Naive thymus-derived CD4-positive, alpha-beta T cell (primary cell): ENCODE measurements at regions of chr15 and their contacts with region 1.

Region 1: DNA sequence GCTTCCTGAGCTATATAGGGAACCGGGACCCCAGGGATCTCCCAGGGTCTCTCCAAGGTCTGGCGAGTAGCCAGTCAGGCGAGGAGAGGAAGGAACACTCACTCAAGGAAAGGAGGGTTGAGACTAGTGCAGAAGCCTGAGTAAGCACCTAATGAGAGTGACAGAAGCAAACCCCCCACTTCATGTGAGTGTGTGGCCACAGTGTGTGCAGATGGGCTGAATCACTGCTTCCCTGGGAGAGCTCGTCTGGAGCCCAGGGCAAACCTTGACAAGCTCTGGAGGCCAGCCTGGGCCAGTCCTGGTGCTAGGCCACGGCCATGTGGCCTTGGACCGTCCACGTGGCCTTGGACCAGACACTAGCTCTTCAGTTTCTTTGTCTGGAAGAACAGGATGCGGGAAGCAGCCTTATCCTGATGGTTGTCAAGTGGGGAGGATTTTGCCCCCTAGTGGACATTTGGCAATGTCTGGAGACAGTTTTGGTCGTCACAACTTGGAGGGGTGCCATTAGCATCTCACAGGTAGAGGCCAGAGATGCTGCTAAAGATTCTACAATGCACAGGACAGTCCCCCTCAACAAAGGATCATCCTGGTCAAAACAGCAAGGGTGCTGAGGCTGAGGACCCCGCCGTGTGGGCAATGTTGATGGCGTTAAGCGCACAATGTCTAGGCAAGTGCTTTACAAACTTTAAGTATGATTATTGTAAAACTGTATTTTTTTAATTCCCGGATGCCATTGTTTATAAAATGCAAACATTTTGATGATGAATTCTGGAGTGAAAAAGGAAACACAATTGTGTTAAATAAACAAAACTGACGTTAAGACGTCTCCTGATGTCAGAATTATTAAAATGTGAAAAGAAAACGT is 34.8 kb upstream of the CTSH start:
- DNase-seq: peak in 6 of 9 donors; percentile 1 to 21 (median 10)
- ATAC-seq: peak; percentile 27
- H3K4me3 ChIP-seq: no peak overlapping the region
- H3K4me3 Mint-ChIP-seq: no peak overlapping the region
- H3K27ac ChIP-seq: no peak overlapping the region
- H3K27ac Mint-ChIP-seq: peak overlapping the region in 1 of 9 donors; percentile 62
- H3K4me1 ChIP-seq: no peaks in the 10 kb centered on the region
- H3K4me1 Mint-ChIP-seq: peaks cover 0 to 12% (median 0%) of the 10 kb centered on the region in 7 donors
- H3K27me3 ChIP-seq: no peaks in the 10 kb centered on the region
- H3K27me3 Mint-ChIP-seq: peaks cover 0 to 18% (median 6%) of the 10 kb centered on the region in 5 donors

Region 2: GRCh38 chr15:78859971-78860732 is 119.5 kb before region 1 on chr15:
- CTCF ChIA-PET with region 1: no interaction called
- POLR2A ChIA-PET with region 1: no interaction called
- intact Hi-C with region 1: loop called in 1 of 2 experiments (anchors 1 kb)
- DNase-seq: peak; percentile 41 to 80 (median 61)
- ATAC-seq: peak; percentile 84
- H3K4me3 ChIP-seq: peak overlapping the region; percentile 46
- H3K4me3 Mint-ChIP-seq: peak overlapping the region; percentile 69 to 90 (median 84)
- H3K27ac ChIP-seq: peak overlapping the region; percentile 36
- H3K27ac Mint-ChIP-seq: peak overlapping the region; percentile 13 to 95 (median 83)
- H3K4me1 ChIP-seq: no peaks in the 10 kb centered on the region
- H3K4me1 Mint-ChIP-seq: peaks cover 0 to 10% (median 6%) of the 10 kb centered on the region in 7 donors
- H3K27me3 ChIP-seq: no peaks in the 10 kb centered on the region
- H3K27me3 Mint-ChIP-seq: peaks cover 0 to 15% (median 0%) of the 10 kb centered on the region in 5 donors

Region 3: DNA sequence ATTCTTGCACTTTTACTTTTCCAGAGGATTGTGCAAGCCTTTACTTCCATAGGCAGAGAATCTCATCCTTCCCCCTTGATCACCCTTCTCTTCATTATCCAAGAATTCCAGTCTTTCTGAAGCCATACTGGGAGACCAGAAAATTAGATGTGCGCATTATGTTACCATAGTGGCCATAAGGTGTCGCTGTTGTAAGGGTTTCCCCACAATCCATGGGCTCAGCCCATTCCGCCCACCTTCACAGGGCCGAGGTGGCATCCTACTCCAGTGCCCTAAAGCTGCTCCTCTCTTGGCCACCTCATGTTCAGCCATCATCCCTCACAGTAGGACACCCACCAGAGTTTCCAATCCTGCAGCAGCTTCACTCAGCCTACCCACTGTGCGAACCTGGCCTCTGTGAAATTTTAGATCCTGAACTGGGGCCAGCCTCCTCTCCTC is 69.9 kb before region 1 on chr15:
- CTCF ChIA-PET with region 1: no interaction called
- POLR2A ChIA-PET with region 1: no interaction called
- intact Hi-C with region 1: loop called (anchors 1 kb)
- DNase-seq: peak in 2 of 9 donors; percentile 19 to 23
- ATAC-seq: peak; percentile 65
- H3K4me3 ChIP-seq: no peak overlapping the region
- H3K4me3 Mint-ChIP-seq: no peak overlapping the region
- H3K27ac ChIP-seq: no peak overlapping the region
- H3K27ac Mint-ChIP-seq: peak overlapping the region in 6 of 9 donors; percentile 1 to 68 (median 39)
- H3K4me1 ChIP-seq: no peaks in the 10 kb centered on the region
- H3K4me1 Mint-ChIP-seq: peaks cover 5 to 41% (median 26%) of the 10 kb centered on the region in 7 donors
- H3K27me3 ChIP-seq: no peaks in the 10 kb centered on the region
- H3K27me3 Mint-ChIP-seq: no peaks in the 10 kb centered on the region

Region 4: GRCh38 chr15:78944669-78945407 is 34.9 kb before region 1 on chr15 and contains the start of gene CTSH:
- CTCF ChIA-PET with region 1: no interaction called
- POLR2A ChIA-PET with region 1: no interaction called
- intact Hi-C with region 1: loop called in 1 of 2 experiments (anchors 5 kb)
- DNase-seq: peak; percentile 30 to 80 (median 60)
- ATAC-seq: peak; percentile 93
- H3K4me3 ChIP-seq: peak within 1 kb of the TSS; percentile 60
- H3K4me3 Mint-ChIP-seq: peak within 1 kb of the TSS; percentile 59 to 89 (median 74)
- H3K27ac ChIP-seq: no peak within 1 kb of the TSS
- H3K27ac Mint-ChIP-seq: peak within 1 kb of the TSS in 1 of 9 donors; percentile 52
- H3K4me1 ChIP-seq: peaks cover 0 to 6% of the 10 kb centered on the region in 2 donors
- H3K4me1 Mint-ChIP-seq: peaks cover 0 to 9% (median 7%) of the 10 kb centered on the region in 7 donors
- H3K27me3 ChIP-seq: no peaks in the 10 kb centered on the region
- H3K27me3 Mint-ChIP-seq: peaks cover 0 to 37% (median 5%) of the 10 kb centered on the region in 5 donors
- total RNA-seq, gene CTSH: 8.4 to 98.4 (median 10.4) TPM

Region 5: DNA sequence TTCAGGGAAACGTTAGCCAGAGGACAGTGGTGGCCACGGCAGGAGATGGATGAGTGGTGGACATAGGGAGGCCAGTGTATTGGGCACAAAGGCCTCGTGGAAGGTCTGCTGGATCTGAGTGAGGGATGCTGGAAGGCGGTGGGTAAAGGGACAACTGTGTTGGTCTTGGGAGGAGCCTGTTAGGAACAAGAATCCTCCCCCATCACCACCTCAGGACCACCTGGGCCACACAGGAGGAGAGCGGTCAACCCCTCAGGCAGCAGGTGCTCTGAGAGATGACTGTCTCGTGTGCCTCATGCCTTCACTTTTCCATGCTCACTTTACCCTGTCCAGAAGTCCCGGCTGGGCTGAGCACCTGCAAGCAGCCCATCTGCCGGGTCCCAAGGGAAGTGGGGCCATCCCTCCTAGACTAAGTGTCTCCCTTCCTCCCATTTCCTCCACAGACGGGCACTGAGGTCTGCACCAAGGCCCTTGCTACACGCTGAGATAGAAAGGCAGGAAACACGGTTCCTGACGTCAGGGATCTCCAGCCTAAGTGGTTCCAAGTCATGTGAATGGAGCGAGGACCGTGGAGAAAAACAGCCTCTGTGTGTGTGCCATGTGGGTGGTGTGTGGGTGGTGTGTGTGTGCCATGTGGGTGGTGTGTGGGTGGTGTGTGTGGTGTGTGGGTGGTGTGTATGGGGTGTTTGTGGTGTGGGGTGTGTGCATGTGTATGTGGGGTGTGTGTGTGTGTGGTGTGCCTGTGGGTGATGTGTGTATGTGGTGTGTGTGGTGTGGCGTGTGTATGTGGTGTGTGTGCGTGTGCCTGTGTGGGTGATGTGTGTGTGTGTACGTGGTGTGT is 12.9 kb after region 1 on chr15:
- CTCF ChIA-PET with region 1: no interaction called
- POLR2A ChIA-PET with region 1: no interaction called
- intact Hi-C with region 1: no loop called
- DNase-seq: no peak
- ATAC-seq: no peak
- H3K4me3 ChIP-seq: no peak overlapping the region
- H3K4me3 Mint-ChIP-seq: no peak overlapping the region
- H3K27ac ChIP-seq: no peak overlapping the region
- H3K27ac Mint-ChIP-seq: peak overlapping the region in 1 of 9 donors; percentile 16
- H3K4me1 ChIP-seq: no peaks in the 10 kb centered on the region
- H3K4me1 Mint-ChIP-seq: peaks cover 0 to 11% (median 0%) of the 10 kb centered on the region in 7 donors
- H3K27me3 ChIP-seq: no peaks in the 10 kb centered on the region
- H3K27me3 Mint-ChIP-seq: peaks cover 0 to 15% (median 0%) of the 10 kb centered on the region in 5 donors